ENCODE measurements at regions of chr3 and their contacts with region 1.

Region 1: DNA sequence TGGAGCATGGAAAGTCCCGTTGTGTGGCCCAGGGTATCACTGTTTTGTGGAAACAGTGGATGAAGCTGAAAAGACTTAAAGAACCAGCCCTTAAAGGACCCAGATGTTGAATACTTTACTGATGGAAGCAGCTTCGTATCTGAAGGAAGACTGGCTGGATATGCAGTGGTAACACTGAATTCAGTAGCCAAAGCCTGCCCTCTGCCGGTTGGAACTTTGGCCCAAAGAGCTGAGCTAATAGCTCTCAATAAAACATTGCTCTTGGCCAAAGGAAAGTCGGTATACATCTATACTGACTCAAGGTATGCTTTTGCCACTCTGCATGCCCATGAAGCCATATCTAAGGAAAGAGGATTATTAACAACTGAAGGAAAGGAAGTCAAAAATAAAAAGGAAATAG is 885.4 kb downstream of the PDCD6IP start:
- DNase-seq: no peak
- ATAC-seq: no peak
- H3K4me3 ChIP-seq: no peak overlapping the region
- H3K27ac ChIP-seq: no peak overlapping the region
- H3K4me1 ChIP-seq: no peaks in the 10 kb centered on the region
- H3K27me3 ChIP-seq: no peaks in the 10 kb centered on the region
- CTCF ChIP-seq: peak in 2 of 3 experiments; percentile 27 to 41; a peak in 3 of 6 replicates
- POLR2A ChIP-seq: no peak
- RAD21 ChIP-seq: peak; percentile 35; the same call in 1 of the 2 replicates

Region 2: GRCh38 chr3:33883538-33883950 is 800.3 kb before region 1 on chr3:
- CTCF ChIA-PET with region 1: interaction called, 11 read pairs
- POLR2A ChIA-PET with region 1: no interaction called
- RAD21 ChIA-PET with region 1: no interaction called
- intact Hi-C with region 1: loop called (anchors 1 kb)
- DNase-seq: peak; percentile 23
- ATAC-seq: peak; percentile 55
- H3K4me3 ChIP-seq: no peak overlapping the region
- H3K27ac ChIP-seq: no peak overlapping the region
- H3K4me1 ChIP-seq: no peaks in the 10 kb centered on the region
- H3K27me3 ChIP-seq: peaks cover 11% of the 10 kb centered on the region; the same call in 1 of the 2 replicates
- CTCF ChIP-seq: peak; percentile 57 to 93 (median 59); a peak in 5 of 6 replicates
- POLR2A ChIP-seq: no peak
- RAD21 ChIP-seq: peak; percentile 79

Region 3: GRCh38 chr3:33980252-33980651 is 703.6 kb before region 1 on chr3:
- CTCF ChIA-PET with region 1: no interaction called
- POLR2A ChIA-PET with region 1: no interaction called
- RAD21 ChIA-PET with region 1: no interaction called
- intact Hi-C with region 1: loop called (anchors 5 kb)
- DNase-seq: peak; percentile 8
- ATAC-seq: peak; percentile 72
- H3K4me3 ChIP-seq: no peak overlapping the region
- H3K27ac ChIP-seq: no peak overlapping the region
- H3K4me1 ChIP-seq: no peaks in the 10 kb centered on the region
- H3K27me3 ChIP-seq: peaks cover 7% of the 10 kb centered on the region
- CTCF ChIP-seq: peak; percentile 13 to 49 (median 45); a peak in 4 of 6 replicates
- POLR2A ChIP-seq: no peak
- RAD21 ChIP-seq: peak; percentile 58

Region 4: GRCh38 chr3:34669490-34669889 is 14.4 kb before region 1 on chr3:
- CTCF ChIA-PET with region 1: no interaction called
- POLR2A ChIA-PET with region 1: no interaction called
- RAD21 ChIA-PET with region 1: no interaction called
- intact Hi-C with region 1: no loop called
- DNase-seq: no peak
- ATAC-seq: no peak
- H3K4me3 ChIP-seq: no peak overlapping the region
- H3K27ac ChIP-seq: no peak overlapping the region
- H3K4me1 ChIP-seq: no peaks in the 10 kb centered on the region
- H3K27me3 ChIP-seq: no peaks in the 10 kb centered on the region
- CTCF ChIP-seq: no peak
- POLR2A ChIP-seq: no peak
- RAD21 ChIP-seq: no peak